Caco-2 (cell line): ENCODE measurements at regions of chr4 and their contacts with region 1.

Region 1: GRCh38 chr4:182143822-182144625 is 99.2 kb upstream of the TENM3 start:
- DNase-seq: peak; percentile 72 to 75
- H3K4me3 ChIP-seq: peak overlapping the region; percentile 90
- H3K4me3 Mint-ChIP-seq: peak overlapping the region; percentile 86
- H3K27ac Mint-ChIP-seq: peak overlapping the region; percentile 98
- H3K4me1 ChIP-seq: peaks cover 37% of the 10 kb centered on the region
- H3K4me1 Mint-ChIP-seq: peaks cover 7% of the 10 kb centered on the region
- H3K27me3 ChIP-seq: no peaks in the 10 kb centered on the region
- H3K27me3 Mint-ChIP-seq: no peaks in the 10 kb centered on the region
- CTCF ChIP-seq: no peak

Region 2: GRCh38 chr4:182179751-182180150 is 35.7 kb after region 1 on chr4:
- CTCF ChIA-PET with region 1: no interaction called
- POLR2A ChIA-PET with region 1: no interaction called
- intact Hi-C with region 1: loop called (anchors 2 kb)
- DNase-seq: no peak
- H3K4me3 ChIP-seq: no peak overlapping the region
- H3K4me3 Mint-ChIP-seq: no peak overlapping the region
- H3K27ac Mint-ChIP-seq: no peak overlapping the region
- H3K4me1 ChIP-seq: peaks cover 53% of the 10 kb centered on the region
- H3K4me1 Mint-ChIP-seq: no peaks in the 10 kb centered on the region
- H3K27me3 ChIP-seq: no peaks in the 10 kb centered on the region
- H3K27me3 Mint-ChIP-seq: no peaks in the 10 kb centered on the region
- CTCF ChIP-seq: no peak

Region 3: DNA sequence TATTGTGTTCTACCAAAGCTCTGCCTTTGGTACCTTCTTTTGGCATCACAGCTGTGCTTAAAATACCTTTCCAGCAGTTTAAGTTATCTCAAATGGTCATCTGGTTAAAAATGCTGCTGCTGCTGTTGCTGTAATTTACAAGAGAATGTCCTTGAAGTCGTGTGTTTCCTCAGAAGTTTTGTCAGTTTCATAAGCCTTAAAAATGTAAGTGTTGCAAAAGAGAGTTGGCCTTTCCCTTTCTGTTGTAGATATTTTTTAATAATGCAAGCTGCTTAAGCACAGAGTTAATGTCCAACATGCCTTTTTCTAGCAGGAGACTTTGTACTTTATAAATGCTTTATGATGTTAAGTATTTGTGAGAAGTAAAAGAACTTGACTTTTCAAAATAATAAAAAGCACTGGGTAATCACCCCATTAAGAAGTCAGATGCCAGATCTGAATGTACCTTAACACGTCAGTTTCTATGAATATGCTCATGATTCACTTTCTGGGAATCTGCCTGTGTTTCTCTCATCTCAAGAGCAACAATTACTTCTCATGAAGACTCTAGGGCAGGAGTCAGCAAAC is 63.9 kb after region 1 on chr4:
- CTCF ChIA-PET with region 1: no interaction called
- POLR2A ChIA-PET with region 1: no interaction called
- intact Hi-C with region 1: loop called (anchors 5 kb)
- DNase-seq: no peak
- H3K4me3 ChIP-seq: no peak overlapping the region
- H3K4me3 Mint-ChIP-seq: no peak overlapping the region
- H3K27ac Mint-ChIP-seq: peak overlapping the region; percentile 60
- H3K4me1 ChIP-seq: peaks cover 60% of the 10 kb centered on the region
- H3K4me1 Mint-ChIP-seq: peaks cover 42% of the 10 kb centered on the region
- H3K27me3 ChIP-seq: no peaks in the 10 kb centered on the region
- H3K27me3 Mint-ChIP-seq: no peaks in the 10 kb centered on the region
- CTCF ChIP-seq: no peak

Region 4: GRCh38 chr4:182250446-182250845 is 106.4 kb after region 1 on chr4:
- CTCF ChIA-PET with region 1: no interaction called
- POLR2A ChIA-PET with region 1: no interaction called
- intact Hi-C with region 1: no loop called
- DNase-seq: no peak
- H3K4me3 ChIP-seq: no peak overlapping the region
- H3K4me3 Mint-ChIP-seq: no peak overlapping the region
- H3K27ac Mint-ChIP-seq: no peak overlapping the region
- H3K4me1 ChIP-seq: peaks cover 10% of the 10 kb centered on the region; the same call in 1 of the 2 replicates
- H3K4me1 Mint-ChIP-seq: peaks cover 19% of the 10 kb centered on the region
- H3K27me3 ChIP-seq: no peaks in the 10 kb centered on the region
- H3K27me3 Mint-ChIP-seq: no peaks in the 10 kb centered on the region
- CTCF ChIP-seq: no peak

Region 5: GRCh38 chr4:182276214-182277109 is 132.4 kb after region 1 on chr4:
- CTCF ChIA-PET with region 1: no interaction called
- POLR2A ChIA-PET with region 1: no interaction called
- intact Hi-C with region 1: loop called (anchors 1 kb)
- DNase-seq: peak in 1 of 2 experiments; percentile 41
- H3K4me3 ChIP-seq: no peak overlapping the region
- H3K4me3 Mint-ChIP-seq: peak overlapping the region; percentile 22
- H3K27ac Mint-ChIP-seq: peak overlapping the region; percentile 26
- H3K4me1 ChIP-seq: peaks cover 65% of the 10 kb centered on the region
- H3K4me1 Mint-ChIP-seq: peaks cover 28% of the 10 kb centered on the region
- H3K27me3 ChIP-seq: no peaks in the 10 kb centered on the region
- H3K27me3 Mint-ChIP-seq: no peaks in the 10 kb centered on the region
- CTCF ChIP-seq: no peak